ENCODE measurements at regions of chr5 and their contacts with region 1.

Region 1: GRCh38 chr5:111092062-111092853 is at the start of gene WDR36:
- DNase-seq: peak; percentile 89 to 96
- H3K4me3 ChIP-seq: peak within 1 kb of the TSS; percentile 72 to 99 (median 88)
- H3K27ac ChIP-seq: peak within 1 kb of the TSS; percentile 81 to 90 (median 84)
- H3K4me1 ChIP-seq: peaks cover 13 to 33% (median 27%) of the 10 kb centered on the region in 4 donors
- H3K27me3 ChIP-seq: no peaks in the 10 kb centered on the region
- CTCF ChIP-seq: peak in 1 of 7 experiments; percentile 7
- EP300 ChIP-seq: no peak
- POLR2A ChIP-seq: no peak
- total RNA-seq, gene WDR36: 5.5 to 50.7 (median 13.4) TPM

Region 2: GRCh38 chr5:110687485-110687884 is 404.8 kb before region 1 on chr5:
- intact Hi-C with region 1: no loop called
- DNase-seq: no peak
- H3K4me3 ChIP-seq: no peak overlapping the region
- H3K27ac ChIP-seq: no peak overlapping the region
- H3K4me1 ChIP-seq: no peaks in the 10 kb centered on the region
- H3K27me3 ChIP-seq: no peaks in the 10 kb centered on the region
- CTCF ChIP-seq: no peak
- EP300 ChIP-seq: no peak
- POLR2A ChIP-seq: no peak

Region 3: GRCh38 chr5:110757118-110757729 is 335.0 kb before region 1 on chr5:
- intact Hi-C with region 1: loop called (anchors 10 kb)
- DNase-seq: peak in 1 of 2 donors; percentile 70
- H3K4me3 ChIP-seq: no peak overlapping the region
- H3K27ac ChIP-seq: no peak overlapping the region
- H3K4me1 ChIP-seq: peaks cover 0 to 5% (median 2%) of the 10 kb centered on the region in 4 donors
- H3K27me3 ChIP-seq: no peaks in the 10 kb centered on the region
- CTCF ChIP-seq: peak in 5 of 7 experiments; percentile 22 to 70 (median 63)
- EP300 ChIP-seq: no peak
- POLR2A ChIP-seq: no peak

Region 4: GRCh38 chr5:111158105-111158744 is 66.0 kb after region 1 on chr5:
- intact Hi-C with region 1: no loop called
- DNase-seq: peak; percentile 75 to 91
- H3K4me3 ChIP-seq: no peak overlapping the region
- H3K27ac ChIP-seq: no peak overlapping the region
- H3K4me1 ChIP-seq: peaks cover 0 to 5% (median 0%) of the 10 kb centered on the region in 4 donors
- H3K27me3 ChIP-seq: no peaks in the 10 kb centered on the region
- CTCF ChIP-seq: peak in 5 of 7 experiments; percentile 93 to 100 (median 97)
- EP300 ChIP-seq: no peak
- POLR2A ChIP-seq: no peak

Region 5: GRCh38 chr5:111194053-111194452 is 101.8 kb after region 1 on chr5:
- intact Hi-C with region 1: no loop called
- DNase-seq: no peak
- H3K4me3 ChIP-seq: no peak overlapping the region
- H3K27ac ChIP-seq: no peak overlapping the region
- H3K4me1 ChIP-seq: peaks cover 0 to 4% (median 0%) of the 10 kb centered on the region in 4 donors
- H3K27me3 ChIP-seq: no peaks in the 10 kb centered on the region
- CTCF ChIP-seq: no peak
- EP300 ChIP-seq: no peak
- POLR2A ChIP-seq: no peak

Region 6: GRCh38 chr5:111234125-111234524 is 141.9 kb after region 1 on chr5:
- intact Hi-C with region 1: no loop called
- DNase-seq: no peak
- H3K4me3 ChIP-seq: no peak overlapping the region
- H3K27ac ChIP-seq: no peak overlapping the region
- H3K4me1 ChIP-seq: no peaks in the 10 kb centered on the region
- H3K27me3 ChIP-seq: no peaks in the 10 kb centered on the region
- CTCF ChIP-seq: no peak
- EP300 ChIP-seq: no peak
- POLR2A ChIP-seq: no peak